CD14-positive monocyte (primary cell): ENCODE measurements at regions of chr17 and their contacts with region 1.

Region 1: DNA sequence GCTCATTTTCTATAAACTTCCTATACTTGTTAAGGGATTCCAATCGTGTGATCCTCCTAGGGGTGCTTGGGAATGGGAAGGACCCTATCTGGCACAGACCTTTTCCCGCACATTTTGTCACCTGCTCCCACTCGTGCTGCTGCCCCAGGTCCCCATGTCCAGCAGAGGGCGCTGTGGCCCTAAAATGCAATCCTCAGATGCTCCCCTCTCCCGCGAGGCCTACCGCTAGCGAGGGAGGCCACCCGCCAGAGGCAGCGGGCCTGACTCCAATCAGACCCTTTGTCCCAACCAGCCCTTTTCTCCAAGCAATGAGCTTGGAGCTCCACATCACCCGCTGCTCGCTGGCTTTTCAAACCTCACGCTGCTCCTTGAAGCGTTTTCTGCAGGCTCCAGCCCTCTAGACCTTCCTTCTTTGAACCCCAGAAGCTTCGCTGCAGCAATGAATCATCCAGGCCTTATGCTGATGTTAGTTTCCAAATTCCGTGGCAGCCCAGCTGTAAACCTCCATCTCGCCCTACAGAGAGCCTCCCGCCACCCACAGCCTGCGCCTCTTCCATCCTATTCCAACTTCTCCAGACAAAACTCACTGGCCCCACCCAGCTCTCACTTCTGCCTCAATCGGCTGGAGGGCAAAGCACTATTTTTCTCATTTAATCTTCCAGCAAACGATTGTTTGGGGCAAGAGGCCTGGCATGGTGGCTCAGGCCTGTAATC is 23.6 kb upstream of the FZD2 start:
- DNase-seq: peak; percentile 77 to 82 (median 81)
- H3K4me3 ChIP-seq: peak overlapping the region in 2 of 3 experiments; percentile 2 to 69
- H3K4me3 Mint-ChIP-seq: peak overlapping the region; percentile 73 to 84
- H3K27ac ChIP-seq: no peak overlapping the region
- H3K27ac Mint-ChIP-seq: peak overlapping the region in 6 of 7 donors; percentile 21 to 76 (median 34)
- H3K4me1 ChIP-seq: peaks cover 22 to 27% of the 10 kb centered on the region in 2 donors
- H3K4me1 Mint-ChIP-seq: peaks cover 30% of the 10 kb centered on the region
- H3K27me3 ChIP-seq: no peaks in the 10 kb centered on the region
- H3K27me3 Mint-ChIP-seq: peaks cover 0 to 8% (median 3%) of the 10 kb centered on the region in 3 donors
- CTCF ChIP-seq: peak; percentile 98

Region 2: DNA sequence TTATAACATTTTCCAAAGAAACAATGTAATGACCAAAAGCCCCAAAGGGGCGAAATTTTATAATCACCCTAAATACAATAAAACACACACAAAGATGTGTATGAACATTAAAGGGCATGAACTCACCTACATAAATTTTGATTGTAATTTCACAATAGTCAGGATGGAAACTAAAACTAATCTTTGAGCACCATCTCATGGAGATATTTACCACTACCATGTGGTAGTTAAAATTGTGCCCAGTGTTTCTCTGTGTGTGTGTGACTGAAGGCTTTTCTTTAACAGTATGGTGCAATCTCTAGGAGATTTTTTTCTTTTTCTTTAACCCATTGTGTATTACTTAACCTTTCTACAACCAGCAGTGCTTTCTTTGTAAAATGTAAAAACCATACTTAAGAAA is 102.9 kb after region 1 on chr17:
- intact Hi-C with region 1: loop called (anchors 1 to 2 kb)
- DNase-seq: peak; percentile 16 to 63 (median 44)
- H3K4me3 ChIP-seq: no peak overlapping the region
- H3K4me3 Mint-ChIP-seq: no peak overlapping the region
- H3K27ac ChIP-seq: no peak overlapping the region
- H3K27ac Mint-ChIP-seq: no peak overlapping the region
- H3K4me1 ChIP-seq: no peaks in the 10 kb centered on the region
- H3K4me1 Mint-ChIP-seq: no peaks in the 10 kb centered on the region
- H3K27me3 ChIP-seq: peaks cover 0 to 3% of the 10 kb centered on the region in 2 donors
- H3K27me3 Mint-ChIP-seq: peaks cover 8 to 12% (median 8%) of the 10 kb centered on the region in 3 donors
- CTCF ChIP-seq: peak; percentile 68

Region 3: GRCh38 chr17:44672479-44673093 is 138.9 kb after region 1 on chr17:
- intact Hi-C with region 1: loop called in 1 of 2 experiments (anchors 10 kb)
- DNase-seq: peak in 1 of 3 donors; percentile 9
- H3K4me3 ChIP-seq: no peak overlapping the region
- H3K4me3 Mint-ChIP-seq: no peak overlapping the region
- H3K27ac ChIP-seq: no peak overlapping the region
- H3K27ac Mint-ChIP-seq: no peak overlapping the region
- H3K4me1 ChIP-seq: no peaks in the 10 kb centered on the region
- H3K4me1 Mint-ChIP-seq: no peaks in the 10 kb centered on the region
- H3K27me3 ChIP-seq: peaks cover 4 to 10% of the 10 kb centered on the region in 2 donors
- H3K27me3 Mint-ChIP-seq: peaks cover 0 to 7% (median 6%) of the 10 kb centered on the region in 3 donors
- CTCF ChIP-seq: peak; percentile 67